Breast epithelium (tissue), 4 donors: ENCODE measurements at regions of chr7 and their contacts with region 1.

Region 1: DNA sequence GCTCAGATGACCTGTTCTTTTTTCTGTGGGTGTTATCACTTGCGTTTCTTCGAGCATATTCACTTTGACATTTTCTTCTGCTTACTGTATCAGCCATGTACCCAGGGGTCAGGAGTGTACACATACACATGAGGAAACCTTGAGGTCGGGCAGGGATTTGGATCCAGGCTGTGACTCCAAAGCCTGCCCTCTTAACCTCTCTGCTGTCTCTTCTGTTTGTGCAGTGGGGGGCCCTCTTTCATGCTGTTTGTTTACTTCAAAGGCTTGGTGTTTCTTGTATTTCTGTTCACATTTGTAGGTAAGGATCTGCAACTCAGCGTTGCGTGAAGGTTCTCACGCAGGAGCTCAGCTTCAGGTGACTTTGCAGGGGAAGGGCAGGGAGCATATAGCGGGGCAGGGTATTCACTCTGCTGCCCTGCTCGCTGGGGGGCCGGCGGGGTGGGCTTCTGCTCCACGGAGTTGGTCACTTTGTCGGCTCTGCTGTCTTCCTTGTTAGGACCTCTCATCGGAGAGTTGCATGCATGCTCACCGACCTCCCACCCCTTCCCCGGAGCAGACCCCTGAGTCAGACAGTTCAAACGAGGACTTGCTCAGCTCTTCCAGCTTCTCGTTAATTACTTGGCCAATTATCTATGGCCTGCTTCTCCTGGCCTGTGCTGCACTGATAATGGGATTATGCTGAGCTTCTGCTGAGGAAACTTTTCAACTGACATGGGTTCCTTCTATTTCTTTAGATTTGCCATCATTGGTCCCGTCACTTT is 77.5 kb downstream of the SDK1 start:
- DNase-seq: no peak
- H3K4me3 ChIP-seq: no peak overlapping the region
- H3K27ac ChIP-seq: no peak overlapping the region
- H3K4me1 ChIP-seq: no peaks in the 10 kb centered on the region
- H3K27me3 ChIP-seq: no peaks in the 10 kb centered on the region
- CTCF ChIP-seq: no peak
- POLR2A ChIP-seq: no peak

Region 2: GRCh38 chr7:3358991-3359390 is 19.6 kb before region 1 on chr7:
- intact Hi-C with region 1: loop called (anchors 1 kb)
- DNase-seq: no peak
- H3K4me3 ChIP-seq: no peak overlapping the region
- H3K27ac ChIP-seq: no peak overlapping the region
- H3K4me1 ChIP-seq: no peaks in the 10 kb centered on the region
- H3K27me3 ChIP-seq: no peaks in the 10 kb centered on the region
- CTCF ChIP-seq: no peak
- POLR2A ChIP-seq: no peak

Region 3: GRCh38 chr7:3439333-3440030 is 60.9 kb after region 1 on chr7:
- intact Hi-C with region 1: no loop called
- DNase-seq: no peak
- H3K4me3 ChIP-seq: no peak overlapping the region
- H3K27ac ChIP-seq: no peak overlapping the region
- H3K4me1 ChIP-seq: no peaks in the 10 kb centered on the region
- H3K27me3 ChIP-seq: no peaks in the 10 kb centered on the region
- CTCF ChIP-seq: no peak
- POLR2A ChIP-seq: no peak